Activated T-helper 1 cell treated with anti-CD3 and anti-CD28 coated beads, Interleukin-12 subunit alpha, Interleukin-12 subunit beta, Interleukin-2, Interleukin-4 antibody, amounts not matched to agents 30 ng/mL and 10 ng/mL and 1 ng/mL, durations not matched to agents 14 hours and 24 hours and 36 hours (primary cell): ENCODE measurements at regions of chr14 and their contacts with region 1.

Region 1: DNA sequence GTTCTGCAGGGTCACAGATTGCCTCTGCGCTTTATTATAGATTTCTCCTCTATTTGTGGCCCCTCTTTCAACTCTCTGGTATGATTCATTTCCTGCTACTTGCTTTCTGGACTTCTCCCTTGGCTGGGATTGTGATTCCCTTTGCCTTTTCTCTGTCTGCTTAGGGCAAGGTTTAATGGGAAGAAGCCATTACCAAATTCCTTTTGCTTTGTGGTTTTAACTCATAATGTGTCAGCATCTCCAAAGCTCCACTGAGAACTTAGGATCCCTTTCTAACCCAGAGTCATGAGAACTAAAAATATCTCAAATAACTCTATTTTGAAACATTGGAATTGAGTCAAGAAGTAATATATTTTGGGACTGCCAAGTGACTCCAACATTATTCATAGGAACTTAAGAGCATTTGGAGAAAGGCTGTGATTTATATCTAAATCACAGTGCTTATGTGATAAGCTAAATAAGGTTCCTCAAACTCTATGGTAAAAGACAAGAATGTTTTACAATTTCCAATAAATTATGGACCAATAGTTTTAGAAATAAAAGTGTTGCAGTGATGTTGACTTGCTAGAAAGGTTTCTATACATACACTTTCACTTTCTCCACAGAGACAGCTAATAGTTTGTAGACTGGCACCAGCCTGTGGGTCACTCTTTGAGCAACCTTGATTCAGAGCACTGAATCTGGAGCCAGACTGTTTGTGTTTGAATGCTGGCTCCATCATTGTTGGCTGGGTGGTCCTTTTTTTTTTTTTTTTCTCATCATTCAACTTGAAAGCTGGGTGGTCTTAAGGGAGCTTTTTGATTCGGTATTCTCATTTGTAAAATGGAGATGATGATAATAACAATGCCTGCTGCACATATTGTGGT is 93.9 kb downstream of the DACT1 start:
- DNase-seq: no peak
- H3K4me3 Mint-ChIP-seq: no peak overlapping the region
- H3K27ac Mint-ChIP-seq: no peak overlapping the region
- H3K4me1 Mint-ChIP-seq: peaks cover 9% of the 10 kb centered on the region
- H3K27me3 Mint-ChIP-seq: no peaks in the 10 kb centered on the region

Region 2: DNA sequence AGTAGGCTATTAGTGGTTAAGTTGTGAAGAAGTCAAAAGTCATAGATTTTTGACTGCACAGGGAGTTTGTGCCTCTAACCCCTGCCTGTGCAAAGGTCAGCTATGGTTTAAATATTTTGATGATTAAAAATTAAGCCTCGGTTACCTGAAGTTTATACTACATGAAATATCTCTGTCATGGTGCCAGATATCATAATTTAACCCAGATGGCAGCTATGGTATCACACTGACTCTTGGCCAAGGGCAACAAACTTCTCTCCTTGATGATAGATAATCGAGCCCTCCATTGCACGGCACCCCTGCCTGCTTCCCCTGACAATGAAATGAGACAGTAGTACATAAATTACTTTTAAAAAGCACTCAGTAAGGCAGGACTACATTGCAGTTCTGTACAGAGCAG is 946.6 kb before region 1 on chr14:
- intact Hi-C with region 1: no loop called
- DNase-seq: no peak
- H3K4me3 Mint-ChIP-seq: no peak overlapping the region
- H3K27ac Mint-ChIP-seq: no peak overlapping the region
- H3K4me1 Mint-ChIP-seq: no peaks in the 10 kb centered on the region
- H3K27me3 Mint-ChIP-seq: no peaks in the 10 kb centered on the region

Region 3: DNA sequence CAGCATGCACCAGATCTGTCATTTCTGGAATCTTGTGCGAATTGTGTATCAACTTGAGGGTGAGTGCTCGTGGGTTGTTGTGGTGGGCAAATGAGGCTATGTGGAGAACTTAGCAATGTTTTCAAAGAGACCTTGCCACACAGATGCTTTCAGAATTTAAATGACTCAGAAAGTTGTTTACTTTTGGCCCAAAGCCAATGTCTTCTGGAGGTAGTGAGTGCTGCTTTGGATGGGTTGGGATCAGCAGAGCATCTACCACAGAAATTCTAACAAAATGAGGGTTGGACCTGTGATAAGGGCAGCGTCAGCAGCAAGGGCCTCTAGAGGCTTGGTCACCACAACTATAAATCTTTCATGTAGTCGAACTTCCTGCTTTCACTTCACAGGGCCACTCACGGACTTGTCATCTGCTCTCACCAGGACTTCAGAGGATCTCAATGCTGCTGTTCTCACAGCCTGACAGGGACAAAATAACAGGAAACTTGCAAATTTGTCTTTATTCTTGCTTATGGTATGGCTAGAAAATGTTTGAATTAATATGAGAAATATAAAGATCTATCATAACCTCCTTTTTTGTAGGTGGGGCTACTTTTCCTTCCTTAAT is 17.5 kb after region 1 on chr14:
- intact Hi-C with region 1: loop called (anchors 1 kb)
- DNase-seq: peak; percentile 14
- H3K4me3 Mint-ChIP-seq: peak overlapping the region; percentile 3
- H3K27ac Mint-ChIP-seq: peak overlapping the region; percentile 5
- H3K4me1 Mint-ChIP-seq: peaks cover 15% of the 10 kb centered on the region
- H3K27me3 Mint-ChIP-seq: peaks cover 3% of the 10 kb centered on the region